Activated naive CD4-positive, alpha-beta T cell treated with anti-CD3 and anti-CD28 coated beads for 36 hours (primary cell): ENCODE measurements at regions of chr2 and their contacts with region 1.

Region 1: GRCh38 chr2:171018522-171018921 is 89.5 kb downstream of the GORASP2 start:
- DNase-seq: no peak
- H3K4me3 Mint-ChIP-seq: no peak overlapping the region
- H3K27ac Mint-ChIP-seq: peak overlapping the region; percentile 53
- H3K4me1 Mint-ChIP-seq: peaks cover 36% of the 10 kb centered on the region
- H3K27me3 Mint-ChIP-seq: no peaks in the 10 kb centered on the region

Region 2: DNA sequence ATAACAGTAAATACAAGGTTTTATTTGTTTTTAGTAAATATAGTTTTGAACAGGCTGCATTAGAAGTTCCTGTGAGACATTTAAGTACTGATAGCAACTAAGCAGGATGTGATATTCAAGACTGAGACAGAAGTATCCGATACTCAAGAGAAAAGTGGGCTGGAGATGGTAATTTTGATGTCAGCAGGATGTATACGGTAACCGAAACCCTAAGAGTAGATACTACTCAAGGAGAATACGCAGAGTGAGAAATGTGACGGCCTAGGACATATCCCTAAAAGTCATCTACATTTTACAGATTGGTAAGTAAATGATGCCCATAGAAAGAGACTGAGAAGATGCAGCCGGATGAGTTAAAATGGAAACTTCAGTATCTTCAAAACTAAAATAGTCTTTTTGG is 25.9 kb after region 1 on chr2:
- CTCF ChIA-PET with region 1: no interaction called
- intact Hi-C with region 1: loop called (anchors 1 kb)
- DNase-seq: no peak
- H3K4me3 Mint-ChIP-seq: no peak overlapping the region
- H3K27ac Mint-ChIP-seq: peak overlapping the region; percentile 32
- H3K4me1 Mint-ChIP-seq: peaks cover 29% of the 10 kb centered on the region
- H3K27me3 Mint-ChIP-seq: no peaks in the 10 kb centered on the region

Region 3: DNA sequence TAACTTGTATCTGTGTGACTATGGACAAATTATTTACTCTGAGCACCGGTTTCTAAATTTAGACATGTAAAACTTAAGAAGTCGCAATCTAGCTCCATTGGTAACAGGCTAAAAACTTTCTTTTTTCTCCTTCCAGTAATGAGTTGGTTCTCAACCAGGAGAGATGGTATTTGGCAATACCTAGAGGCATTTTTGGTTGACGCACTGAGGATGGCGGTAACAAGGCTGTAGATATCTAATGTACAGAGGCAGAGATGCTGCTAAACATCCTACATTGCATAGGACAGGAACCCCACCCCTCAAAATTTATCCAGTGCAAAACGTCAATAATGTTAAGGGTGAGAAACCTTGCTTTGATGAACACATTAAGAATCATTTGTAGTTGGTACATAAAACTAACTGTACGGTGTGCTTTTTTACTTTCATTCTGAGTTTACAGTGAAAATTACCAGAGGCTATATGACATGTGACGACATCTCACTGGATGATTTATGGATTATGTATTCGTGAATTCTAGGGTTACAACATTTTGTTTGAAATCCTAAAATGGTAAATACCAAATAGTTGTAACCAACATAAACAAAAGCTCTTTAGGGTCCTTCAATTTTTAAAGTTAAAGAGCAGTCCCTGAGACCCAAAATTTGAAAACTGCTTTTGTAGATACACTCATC is 50.9 kb after region 1 on chr2:
- CTCF ChIA-PET with region 1: no interaction called
- intact Hi-C with region 1: no loop called
- DNase-seq: no peak
- H3K4me3 Mint-ChIP-seq: no peak overlapping the region
- H3K27ac Mint-ChIP-seq: no peak overlapping the region
- H3K4me1 Mint-ChIP-seq: peaks cover 16% of the 10 kb centered on the region
- H3K27me3 Mint-ChIP-seq: no peaks in the 10 kb centered on the region

Region 4: GRCh38 chr2:171416009-171416926 is 397.7 kb after region 1 on chr2:
- CTCF ChIA-PET with region 1: no interaction called
- intact Hi-C with region 1: no loop called
- DNase-seq: peak; percentile 96
- H3K4me3 Mint-ChIP-seq: peak overlapping the region; percentile 32
- H3K27ac Mint-ChIP-seq: peak overlapping the region; percentile 92
- H3K4me1 Mint-ChIP-seq: peaks cover 38% of the 10 kb centered on the region
- H3K27me3 Mint-ChIP-seq: no peaks in the 10 kb centered on the region